Right lobe of liver (tissue), 6 donors: ENCODE measurements at regions of chr2 and their contacts with region 1.

Region 1: DNA sequence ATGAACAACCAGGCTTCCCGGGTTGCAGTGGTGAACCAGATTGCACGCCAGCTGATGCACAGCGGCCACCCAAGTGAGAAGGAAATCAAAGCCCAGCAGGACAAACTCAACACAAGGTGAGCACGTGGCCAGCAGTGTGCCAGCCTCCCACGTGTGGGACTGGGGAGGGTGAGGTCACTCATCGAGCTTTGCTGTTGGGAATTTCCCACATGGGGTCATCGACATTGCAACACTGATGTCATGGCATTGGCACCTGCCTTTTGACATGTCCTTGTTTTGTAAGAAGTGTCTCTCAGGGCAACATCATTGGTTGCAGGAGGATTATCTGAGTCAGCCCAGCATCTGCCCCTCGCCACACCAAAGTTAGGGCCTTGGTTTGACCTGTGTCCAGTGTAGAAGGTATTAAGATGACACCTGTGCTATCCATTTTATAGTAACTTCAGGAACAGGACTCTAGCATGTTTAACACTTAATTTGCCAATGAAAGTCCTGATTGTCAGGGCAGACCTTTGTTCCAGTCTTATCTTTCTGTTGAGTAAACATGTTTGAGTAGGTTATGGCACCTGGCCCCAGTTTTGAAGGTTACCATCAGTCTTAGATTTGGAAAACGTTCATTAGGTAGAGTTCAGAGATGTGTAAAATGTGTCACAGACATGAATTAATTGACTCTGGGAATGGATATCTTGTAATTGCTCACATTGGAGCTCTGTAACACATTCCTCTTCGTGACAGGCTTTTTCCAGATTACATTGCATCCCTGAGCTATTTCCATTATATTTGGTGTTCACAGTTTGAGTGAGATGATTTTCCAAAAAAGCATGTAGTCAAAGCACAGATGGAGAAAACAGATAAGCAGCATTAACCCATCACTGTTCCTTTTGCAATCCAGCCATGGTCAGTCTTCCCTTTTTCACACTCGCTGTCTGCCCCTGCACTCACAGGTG is 93.3 kb upstream of the EML6 start:
- DNase-seq: peak; percentile 90 to 97 (median 95)
- ATAC-seq: peak; percentile 61 to 87 (median 71)
- H3K4me3 ChIP-seq: no peak overlapping the region
- H3K27ac ChIP-seq: peak overlapping the region; percentile 73 to 91 (median 79)
- H3K4me1 ChIP-seq: peaks cover 0 to 65% (median 27%) of the 10 kb centered on the region in 4 donors
- H3K27me3 ChIP-seq: no peaks in the 10 kb centered on the region
- CTCF ChIP-seq: no peak
- POLR2A ChIP-seq: peak; percentile 36

Region 2: GRCh38 chr2:54570925-54571694 is 59.1 kb before region 1 on chr2:
- intact Hi-C with region 1: loop called in 1 of 2 experiments (anchors 10 kb)
- DNase-seq: peak in 2 of 3 donors; percentile 59 to 66
- ATAC-seq: peak; percentile 36 to 69 (median 62)
- H3K4me3 ChIP-seq: no peak overlapping the region
- H3K27ac ChIP-seq: peak overlapping the region; percentile 51 to 85 (median 52)
- H3K4me1 ChIP-seq: peaks cover 0 to 95% (median 46%) of the 10 kb centered on the region in 4 donors
- H3K27me3 ChIP-seq: no peaks in the 10 kb centered on the region
- CTCF ChIP-seq: no peak
- POLR2A ChIP-seq: peak; percentile 11